ENCODE measurements at regions of chr9 and their contacts with region 1.

Region 1: GRCh38 chr9:115591584-115591984 is 473.6 kb upstream of the TNC start:
- DNase-seq: peak in 1 of 2 donors; percentile 52
- ATAC-seq: peak; percentile 79 to 98 (median 86)
- H3K4me3 ChIP-seq: no peak overlapping the region
- H3K27ac ChIP-seq: peak overlapping the region in 2 of 10 donors; percentile 32 to 63
- H3K4me1 ChIP-seq: peaks cover 0 to 5% (median 0%) of the 10 kb centered on the region in 9 donors
- H3K27me3 ChIP-seq: peaks cover 0 to 26% (median 15%) of the 10 kb centered on the region in 7 donors
- CTCF ChIP-seq: peak; percentile 25 to 79 (median 74)

Region 2: DNA sequence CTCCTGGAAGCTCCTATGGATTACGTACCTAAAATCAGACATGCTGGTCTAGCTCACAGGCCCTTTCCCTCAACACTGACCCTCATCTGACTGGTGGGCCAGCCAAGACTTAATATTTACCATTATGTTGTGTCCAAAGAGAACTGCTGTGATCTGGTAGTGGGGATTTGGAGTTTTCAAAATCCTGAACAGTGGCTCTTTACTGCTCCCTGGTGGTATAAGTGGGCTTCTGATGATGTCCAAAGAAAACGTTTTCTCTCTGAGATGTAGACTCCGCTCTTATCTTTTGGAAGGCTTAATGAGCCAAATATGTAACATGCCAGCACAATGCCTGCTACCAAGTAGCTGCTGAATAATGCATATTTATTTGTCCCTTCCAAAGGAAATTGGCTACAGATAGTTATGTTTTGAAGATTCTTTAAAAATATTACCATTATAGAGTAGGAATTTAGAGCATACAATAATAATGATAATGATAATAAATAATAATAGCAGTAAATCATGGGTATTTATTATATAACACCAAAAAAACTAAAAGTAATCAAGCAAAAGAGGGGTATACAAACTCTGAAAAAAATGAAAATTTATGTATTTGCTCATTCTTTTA is 67.0 kb before region 1 on chr9:
- intact Hi-C with region 1: no loop called
- DNase-seq: peak in 1 of 2 donors; percentile 31
- ATAC-seq: peak in 6 of 8 donors; percentile 37 to 63 (median 48)
- H3K4me3 ChIP-seq: no peak overlapping the region
- H3K27ac ChIP-seq: no peak overlapping the region
- H3K4me1 ChIP-seq: peaks cover 0 to 4% (median 0%) of the 10 kb centered on the region in 9 donors
- H3K27me3 ChIP-seq: peaks cover 0 to 5% (median 0%) of the 10 kb centered on the region in 7 donors
- CTCF ChIP-seq: peak; percentile 20 to 74 (median 61)

Region 3: GRCh38 chr9:115575147-115575546 is 16.4 kb before region 1 on chr9:
- intact Hi-C with region 1: no loop called
- DNase-seq: no peak
- ATAC-seq: no peak
- H3K4me3 ChIP-seq: no peak overlapping the region
- H3K27ac ChIP-seq: no peak overlapping the region
- H3K4me1 ChIP-seq: no peaks in the 10 kb centered on the region
- H3K27me3 ChIP-seq: peaks cover 0 to 3% (median 0%) of the 10 kb centered on the region in 7 donors
- CTCF ChIP-seq: no peak

Region 4: GRCh38 chr9:115883457-115884329 is 292.1 kb after region 1 on chr9:
- intact Hi-C with region 1: loop called in 2 of 10 experiments (anchors 10 kb)
- DNase-seq: peak in 1 of 2 donors; percentile 13
- ATAC-seq: peak in 6 of 8 donors; percentile 43 to 81 (median 64)
- H3K4me3 ChIP-seq: no peak overlapping the region
- H3K27ac ChIP-seq: no peak overlapping the region
- H3K4me1 ChIP-seq: no peaks in the 10 kb centered on the region
- H3K27me3 ChIP-seq: no peaks in the 10 kb centered on the region
- CTCF ChIP-seq: peak; percentile 11 to 66 (median 57)

Region 5: DNA sequence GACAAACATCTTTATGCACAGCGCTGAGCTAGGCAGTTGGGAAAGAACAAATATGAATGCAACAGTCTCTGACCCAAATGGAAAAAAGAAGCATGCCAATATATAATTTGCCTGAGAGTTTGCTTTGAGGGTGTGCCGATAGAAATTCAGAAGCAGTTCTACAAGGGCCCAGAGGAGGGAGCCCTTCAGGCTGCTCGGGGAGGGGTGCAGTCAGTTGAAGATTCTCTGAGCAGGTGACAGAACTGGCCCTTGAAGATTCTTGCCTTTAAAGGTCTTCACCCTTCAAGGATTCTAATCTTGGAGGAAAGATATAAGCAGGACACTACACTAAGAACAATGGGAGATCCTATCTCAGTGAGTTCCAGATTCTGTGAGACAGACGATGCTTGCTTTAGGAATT is 558.3 kb after region 1 on chr9:
- intact Hi-C with region 1: loop called in 5 of 10 experiments (anchors 5 to 10 kb)
- DNase-seq: no peak
- ATAC-seq: peak in 2 of 8 donors; percentile 24 to 47
- H3K4me3 ChIP-seq: no peak overlapping the region
- H3K27ac ChIP-seq: no peak overlapping the region
- H3K4me1 ChIP-seq: peaks cover 0 to 13% (median 0%) of the 10 kb centered on the region in 9 donors
- H3K27me3 ChIP-seq: peaks cover 0 to 37% (median 6%) of the 10 kb centered on the region in 7 donors
- CTCF ChIP-seq: peak; percentile 36 to 72 (median 60)

Region 6: GRCh38 chr9:116494815-116495634 is 903.4 kb after region 1 on chr9:
- intact Hi-C with region 1: loop called in 2 of 10 experiments (anchors 10 kb)
- DNase-seq: peak in 1 of 2 donors; percentile 9
- ATAC-seq: peak in 1 of 8 donors; percentile 37
- H3K4me3 ChIP-seq: no peak overlapping the region
- H3K27ac ChIP-seq: no peak overlapping the region
- H3K4me1 ChIP-seq: peaks cover 0 to 9% (median 0%) of the 10 kb centered on the region in 9 donors
- H3K27me3 ChIP-seq: no peaks in the 10 kb centered on the region
- CTCF ChIP-seq: peak; percentile 35 to 76 (median 66)

Region 7: DNA sequence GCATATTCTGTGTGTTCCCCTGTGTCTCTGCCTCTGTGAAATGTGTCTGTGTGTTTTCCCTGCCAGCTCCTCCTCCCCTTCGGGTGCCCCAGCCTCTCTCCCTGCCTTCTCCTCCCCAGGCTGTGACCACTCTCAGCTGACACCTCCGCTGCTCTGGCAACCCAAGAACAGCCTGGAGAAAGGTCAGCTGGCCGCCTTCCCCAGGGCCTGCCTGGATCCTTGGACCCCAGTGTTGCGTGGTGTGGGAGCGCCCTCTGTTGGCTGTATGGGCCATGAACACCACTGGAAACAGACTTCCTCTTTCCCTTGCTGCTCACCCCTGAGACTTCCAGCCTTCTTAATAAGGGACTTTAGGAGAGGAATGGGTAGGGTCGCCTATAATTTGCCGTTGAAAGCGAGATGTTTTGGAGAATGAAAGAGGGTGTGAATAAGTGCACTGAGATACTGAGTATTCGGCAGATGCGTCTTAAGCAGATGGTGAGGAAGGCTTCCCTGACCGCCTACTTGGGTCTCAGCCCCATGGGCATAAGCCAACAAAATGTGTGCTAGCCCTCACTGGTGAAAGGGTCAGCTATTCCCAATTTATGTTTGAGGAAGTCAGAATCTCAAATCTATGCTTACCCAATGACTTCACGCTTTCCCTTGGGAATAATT is 980.6 kb after region 1 on chr9:
- intact Hi-C with region 1: loop called in 8 of 10 experiments (anchors 2 to 10 kb)
- DNase-seq: peak; percentile 89 to 91
- ATAC-seq: peak; percentile 95 to 100 (median 97)
- H3K4me3 ChIP-seq: no peak overlapping the region
- H3K27ac ChIP-seq: peak overlapping the region in 4 of 10 donors; percentile 2 to 39 (median 12)
- H3K4me1 ChIP-seq: peaks cover 0 to 48% (median 38%) of the 10 kb centered on the region in 9 donors
- H3K27me3 ChIP-seq: no peaks in the 10 kb centered on the region
- CTCF ChIP-seq: peak; percentile 72 to 96 (median 84)

Region 8: GRCh38 chr9:116661037-116661954 is 1069.7 kb after region 1 on chr9:
- intact Hi-C with region 1: loop called in 9 of 10 experiments (anchors 2 to 10 kb)
- DNase-seq: no peak
- ATAC-seq: peak; percentile 68 to 89 (median 80)
- H3K4me3 ChIP-seq: no peak overlapping the region
- H3K27ac ChIP-seq: no peak overlapping the region
- H3K4me1 ChIP-seq: peaks cover 0 to 17% (median 8%) of the 10 kb centered on the region in 9 donors
- H3K27me3 ChIP-seq: no peaks in the 10 kb centered on the region
- CTCF ChIP-seq: peak; percentile 42 to 78 (median 73)